CD4-positive, alpha-beta T cell (primary cell): ENCODE measurements at regions of chr7 and their contacts with region 1.

Region 1: DNA sequence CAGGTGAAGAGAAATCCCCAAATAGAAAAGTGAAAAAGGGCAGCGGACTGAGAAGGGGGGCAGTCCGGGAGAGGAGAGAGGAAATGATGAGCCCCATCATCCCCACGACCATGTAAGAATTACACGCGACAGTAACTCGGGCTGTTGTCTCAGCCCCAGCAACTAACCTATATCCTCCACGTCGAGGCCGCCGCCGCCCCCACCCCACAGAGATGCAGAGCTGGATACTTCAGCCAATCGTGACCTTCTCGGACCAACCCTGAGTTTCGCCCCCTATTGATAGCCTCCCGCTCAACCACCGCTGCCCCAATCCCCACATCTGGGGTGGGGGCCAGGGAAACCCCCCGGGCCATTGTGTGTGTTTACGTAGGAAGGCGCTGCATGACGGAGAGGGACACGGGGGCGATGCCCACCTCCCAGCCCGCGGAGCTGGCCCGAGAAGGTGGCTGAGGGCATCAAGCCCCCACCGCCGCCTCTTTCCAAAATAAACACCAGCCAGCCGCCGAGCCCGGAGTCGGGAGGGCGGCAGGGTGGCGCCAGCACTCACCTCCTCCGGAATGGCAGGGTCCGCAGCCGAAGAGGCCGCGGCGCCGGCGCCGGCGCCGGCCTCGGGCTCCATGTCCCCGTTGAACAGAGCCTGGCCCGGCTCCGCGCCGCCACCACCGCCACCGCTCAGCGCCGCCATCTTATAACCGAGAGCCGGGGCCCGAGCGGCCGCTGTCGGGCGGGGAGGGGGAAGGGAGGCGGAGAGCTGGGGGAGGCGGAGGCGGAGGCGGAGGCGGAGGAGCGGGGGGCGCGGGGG is 509 bp downstream of the BRAF start:
- DNase-seq: peak; percentile 46 to 94 (median 74)
- ATAC-seq: peak; percentile 61
- H3K4me3 ChIP-seq: peak overlapping the region; percentile 92
- H3K4me3 Mint-ChIP-seq: no peak overlapping the region
- H3K27ac ChIP-seq: peak overlapping the region; percentile 90 to 99
- H3K27ac Mint-ChIP-seq: no peak overlapping the region
- H3K4me1 ChIP-seq: peaks cover 12% of the 10 kb centered on the region
- H3K4me1 Mint-ChIP-seq: peaks cover 28% of the 10 kb centered on the region
- H3K27me3 ChIP-seq: no peaks in the 10 kb centered on the region
- H3K27me3 Mint-ChIP-seq: peaks cover 4% of the 10 kb centered on the region
- CTCF ChIP-seq: peak; percentile 13

Region 2: GRCh38 chr7:140673063-140673773 is 251.0 kb before region 1 on chr7:
- CTCF ChIA-PET with region 1: no interaction called
- POLR2A ChIA-PET with region 1: interaction called, 4 read pairs
- intact Hi-C with region 1: loop called in 1 of 2 experiments (anchors 5 kb)
- DNase-seq: peak; percentile 39 to 82 (median 59)
- ATAC-seq: peak; percentile 74
- H3K4me3 ChIP-seq: peak overlapping the region; percentile 63
- H3K4me3 Mint-ChIP-seq: peak overlapping the region; percentile 88
- H3K27ac ChIP-seq: peak overlapping the region; percentile 71 to 79
- H3K27ac Mint-ChIP-seq: peak overlapping the region; percentile 90
- H3K4me1 ChIP-seq: peaks cover 29% of the 10 kb centered on the region
- H3K4me1 Mint-ChIP-seq: peaks cover 32% of the 10 kb centered on the region
- H3K27me3 ChIP-seq: no peaks in the 10 kb centered on the region
- H3K27me3 Mint-ChIP-seq: no peaks in the 10 kb centered on the region
- CTCF ChIP-seq: no peak

Region 3: GRCh38 chr7:140726281-140726680 is 197.9 kb before region 1 on chr7:
- CTCF ChIA-PET with region 1: no interaction called
- POLR2A ChIA-PET with region 1: no interaction called
- intact Hi-C with region 1: loop called in 1 of 2 experiments (anchors 10 kb)
- DNase-seq: peak in 3 of 14 experiments; percentile 16 to 20 (median 16)
- ATAC-seq: no peak
- H3K4me3 ChIP-seq: no peak overlapping the region
- H3K4me3 Mint-ChIP-seq: no peak overlapping the region
- H3K27ac ChIP-seq: no peak overlapping the region
- H3K27ac Mint-ChIP-seq: peak overlapping the region; percentile 48
- H3K4me1 ChIP-seq: peaks cover 3% of the 10 kb centered on the region
- H3K4me1 Mint-ChIP-seq: peaks cover 19% of the 10 kb centered on the region
- H3K27me3 ChIP-seq: no peaks in the 10 kb centered on the region
- H3K27me3 Mint-ChIP-seq: no peaks in the 10 kb centered on the region
- CTCF ChIP-seq: no peak

Region 4: GRCh38 chr7:140873434-140873833 is 50.8 kb before region 1 on chr7:
- CTCF ChIA-PET with region 1: no interaction called
- POLR2A ChIA-PET with region 1: no interaction called
- intact Hi-C with region 1: loop called in 1 of 2 experiments (anchors 5 kb)
- DNase-seq: no peak
- ATAC-seq: no peak
- H3K4me3 ChIP-seq: no peak overlapping the region
- H3K4me3 Mint-ChIP-seq: no peak overlapping the region
- H3K27ac ChIP-seq: no peak overlapping the region
- H3K27ac Mint-ChIP-seq: no peak overlapping the region
- H3K4me1 ChIP-seq: peaks cover 8% of the 10 kb centered on the region
- H3K4me1 Mint-ChIP-seq: peaks cover 64% of the 10 kb centered on the region
- H3K27me3 ChIP-seq: no peaks in the 10 kb centered on the region
- H3K27me3 Mint-ChIP-seq: no peaks in the 10 kb centered on the region
- CTCF ChIP-seq: no peak

Region 5: DNA sequence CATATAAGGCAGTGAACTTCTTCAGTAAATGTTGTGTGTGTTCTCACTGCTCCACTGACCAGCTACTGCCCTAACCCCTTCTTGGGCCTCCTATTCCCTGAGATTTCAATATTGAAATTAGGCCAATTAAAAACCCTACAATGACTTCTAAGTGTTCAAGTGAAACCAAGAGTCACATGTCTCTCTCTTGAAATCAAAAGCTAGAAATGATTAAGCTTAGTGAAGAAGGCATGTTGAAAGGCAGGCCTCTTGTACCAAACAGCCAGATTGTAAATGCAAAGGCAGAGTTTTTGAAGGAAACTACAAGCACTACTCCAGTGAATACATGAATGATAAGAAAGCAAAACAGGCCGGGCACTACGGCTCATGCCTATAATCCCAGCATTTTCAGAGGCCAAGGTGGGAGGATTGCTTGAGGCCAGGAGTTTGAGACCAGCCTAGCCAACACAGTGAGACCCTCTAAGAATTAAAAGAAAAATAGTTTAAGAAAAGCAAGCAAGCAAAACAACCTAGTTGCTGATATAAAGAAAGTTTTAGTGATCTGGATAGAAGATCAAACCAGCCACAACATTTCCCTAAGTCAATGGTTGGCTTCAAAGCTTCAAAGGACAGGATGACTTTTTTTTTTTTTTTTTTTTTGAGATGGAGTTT is 21.8 kb before region 1 on chr7:
- CTCF ChIA-PET with region 1: no interaction called
- POLR2A ChIA-PET with region 1: interaction called, 7 read pairs
- intact Hi-C with region 1: loop called (anchors 1 to 2 kb)
- DNase-seq: peak in 3 of 14 experiments; percentile 47 to 58 (median 56)
- ATAC-seq: peak; percentile 63
- H3K4me3 ChIP-seq: no peak overlapping the region
- H3K4me3 Mint-ChIP-seq: peak overlapping the region; percentile 49
- H3K27ac ChIP-seq: peak overlapping the region in 1 of 2 donors; percentile 51
- H3K27ac Mint-ChIP-seq: peak overlapping the region; percentile 51
- H3K4me1 ChIP-seq: peaks cover 14% of the 10 kb centered on the region
- H3K4me1 Mint-ChIP-seq: peaks cover 82% of the 10 kb centered on the region
- H3K27me3 ChIP-seq: no peaks in the 10 kb centered on the region
- H3K27me3 Mint-ChIP-seq: no peaks in the 10 kb centered on the region
- CTCF ChIP-seq: no peak

Region 6: GRCh38 chr7:141619745-141620144 is 695.5 kb after region 1 on chr7:
- CTCF ChIA-PET with region 1: no interaction called
- POLR2A ChIA-PET with region 1: no interaction called
- intact Hi-C with region 1: no loop called
- DNase-seq: no peak
- ATAC-seq: no peak
- H3K4me3 ChIP-seq: no peak overlapping the region
- H3K4me3 Mint-ChIP-seq: no peak overlapping the region
- H3K27ac ChIP-seq: no peak overlapping the region
- H3K27ac Mint-ChIP-seq: no peak overlapping the region
- H3K4me1 ChIP-seq: no peaks in the 10 kb centered on the region
- H3K4me1 Mint-ChIP-seq: no peaks in the 10 kb centered on the region
- H3K27me3 ChIP-seq: no peaks in the 10 kb centered on the region
- H3K27me3 Mint-ChIP-seq: no peaks in the 10 kb centered on the region
- CTCF ChIP-seq: no peak